Ascending aorta (tissue), 2 donors: ENCODE measurements at regions of chr1 and their contacts with region 1.

Region 1: GRCh38 chr1:201970334-201971159 is 11.9 kb upstream of the RNPEP start:
- DNase-seq: no peak
- H3K4me3 ChIP-seq: no peak overlapping the region
- H3K27ac ChIP-seq: peak overlapping the region in 1 of 2 donors; percentile 7
- H3K4me1 ChIP-seq: peaks cover 0 to 9% of the 10 kb centered on the region in 2 donors
- H3K27me3 ChIP-seq: no peaks in the 10 kb centered on the region
- CTCF ChIP-seq: no peak

Region 2: DNA sequence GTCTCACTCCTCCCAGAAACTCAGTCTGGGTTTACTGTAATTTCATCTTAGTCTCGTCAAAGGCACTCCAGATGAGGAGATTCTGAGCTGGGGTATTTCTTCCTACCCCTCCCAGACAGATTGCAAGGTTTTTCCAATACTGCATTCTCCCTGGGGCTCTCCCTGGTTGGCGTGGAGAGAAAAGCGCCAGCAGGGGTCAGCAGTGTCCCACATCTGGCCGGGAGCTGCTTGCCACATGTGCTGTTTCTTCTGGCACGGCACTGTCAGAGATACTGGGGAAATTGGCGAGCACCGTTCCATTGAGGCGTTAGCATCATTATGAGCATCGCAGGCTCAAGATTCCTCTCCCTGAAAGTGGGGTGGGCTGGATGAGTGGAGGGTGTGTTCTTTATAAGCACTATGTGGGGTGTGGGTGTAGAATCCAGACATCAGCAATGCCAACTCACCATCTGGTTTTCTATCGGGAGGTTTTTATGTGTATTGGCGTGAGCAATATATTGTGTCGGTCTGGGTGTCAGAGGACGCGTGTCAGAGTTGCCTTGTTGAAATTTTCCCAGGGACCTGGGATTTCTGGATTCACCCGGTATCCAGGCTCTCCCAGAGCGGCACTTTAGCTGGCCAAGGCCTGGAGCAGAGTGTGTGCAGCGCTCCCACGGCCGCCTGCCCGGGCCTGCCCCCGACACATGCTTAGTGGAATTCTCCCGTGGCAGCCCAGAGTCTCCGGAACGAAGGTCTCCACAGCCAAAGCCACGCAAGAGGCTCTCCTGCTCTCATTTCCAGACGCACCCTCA is 439.6 kb before region 1 on chr1:
- intact Hi-C with region 1: loop called (anchors 10 kb)
- DNase-seq: peak; percentile 51 to 95
- H3K4me3 ChIP-seq: no peak overlapping the region
- H3K27ac ChIP-seq: peak overlapping the region; percentile 51 to 59
- H3K4me1 ChIP-seq: peaks cover 20 to 45% of the 10 kb centered on the region in 2 donors
- H3K27me3 ChIP-seq: no peaks in the 10 kb centered on the region
- CTCF ChIP-seq: peak; percentile 89 to 96 (median 93)

Region 3: GRCh38 chr1:201828820-201829774 is 141.4 kb before region 1 on chr1 and contains the start of gene IPO9:
- intact Hi-C with region 1: loop called (anchors 5 kb)
- DNase-seq: peak; percentile 67 to 97
- H3K4me3 ChIP-seq: peak within 1 kb of the TSS; percentile 64 to 84
- H3K27ac ChIP-seq: peak within 1 kb of the TSS; percentile 92 to 94
- H3K4me1 ChIP-seq: peaks cover 3 to 30% of the 10 kb centered on the region in 2 donors
- H3K27me3 ChIP-seq: no peaks in the 10 kb centered on the region
- CTCF ChIP-seq: peak; percentile 91 to 97 (median 96)
- total RNA-seq, gene IPO9: 9.3 TPM

Region 4: DNA sequence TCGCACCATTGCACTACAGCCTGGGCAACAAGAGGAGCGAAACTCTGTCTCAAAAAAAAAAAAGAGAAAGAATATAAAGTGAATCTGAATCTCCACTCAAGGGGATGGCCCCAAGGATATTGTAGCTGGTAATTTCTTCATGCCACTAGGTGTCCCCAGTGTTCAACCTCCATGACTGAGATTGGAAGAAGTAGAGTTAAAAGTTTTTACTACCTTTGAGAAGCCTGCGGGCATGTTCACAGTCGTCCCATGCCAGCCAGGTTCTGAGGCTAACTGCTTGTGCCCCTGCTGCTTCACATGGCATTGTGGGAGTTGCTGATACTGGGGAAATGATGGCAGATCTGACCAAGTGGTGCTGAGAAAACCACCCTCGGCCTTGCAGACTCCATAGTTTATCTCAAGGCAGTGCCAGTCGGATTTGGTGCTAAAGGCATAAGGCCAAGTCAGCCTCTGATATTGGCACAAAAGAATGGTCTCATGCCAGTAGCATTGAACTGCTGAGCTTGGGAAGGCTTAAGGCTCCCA is 92.6 kb before region 1 on chr1:
- intact Hi-C with region 1: loop called (anchors 1 kb)
- DNase-seq: peak in 1 of 2 donors; percentile 76
- H3K4me3 ChIP-seq: no peak overlapping the region
- H3K27ac ChIP-seq: peak overlapping the region; percentile 46 to 65
- H3K4me1 ChIP-seq: peaks cover 3 to 12% of the 10 kb centered on the region in 2 donors
- H3K27me3 ChIP-seq: no peaks in the 10 kb centered on the region
- CTCF ChIP-seq: peak; percentile 46 to 79 (median 68)

Region 5: GRCh38 chr1:201895913-201896807 is 74.4 kb before region 1 on chr1:
- intact Hi-C with region 1: loop called (anchors 1 kb)
- DNase-seq: peak; percentile 69 to 96
- H3K4me3 ChIP-seq: no peak overlapping the region
- H3K27ac ChIP-seq: peak overlapping the region; percentile 87 to 94
- H3K4me1 ChIP-seq: peaks cover 42 to 69% of the 10 kb centered on the region in 2 donors
- H3K27me3 ChIP-seq: no peaks in the 10 kb centered on the region
- CTCF ChIP-seq: peak; percentile 90 to 97 (median 94)

Region 6: GRCh38 chr1:201945157-201945556 is 25.4 kb before region 1 on chr1:
- intact Hi-C with region 1: no loop called
- DNase-seq: no peak
- H3K4me3 ChIP-seq: peak overlapping the region; percentile 72 to 91
- H3K27ac ChIP-seq: peak overlapping the region; percentile 87 to 89
- H3K4me1 ChIP-seq: peaks cover 3 to 21% of the 10 kb centered on the region in 2 donors
- H3K27me3 ChIP-seq: no peaks in the 10 kb centered on the region
- CTCF ChIP-seq: peak; percentile 27 to 49 (median 34)

Region 7: DNA sequence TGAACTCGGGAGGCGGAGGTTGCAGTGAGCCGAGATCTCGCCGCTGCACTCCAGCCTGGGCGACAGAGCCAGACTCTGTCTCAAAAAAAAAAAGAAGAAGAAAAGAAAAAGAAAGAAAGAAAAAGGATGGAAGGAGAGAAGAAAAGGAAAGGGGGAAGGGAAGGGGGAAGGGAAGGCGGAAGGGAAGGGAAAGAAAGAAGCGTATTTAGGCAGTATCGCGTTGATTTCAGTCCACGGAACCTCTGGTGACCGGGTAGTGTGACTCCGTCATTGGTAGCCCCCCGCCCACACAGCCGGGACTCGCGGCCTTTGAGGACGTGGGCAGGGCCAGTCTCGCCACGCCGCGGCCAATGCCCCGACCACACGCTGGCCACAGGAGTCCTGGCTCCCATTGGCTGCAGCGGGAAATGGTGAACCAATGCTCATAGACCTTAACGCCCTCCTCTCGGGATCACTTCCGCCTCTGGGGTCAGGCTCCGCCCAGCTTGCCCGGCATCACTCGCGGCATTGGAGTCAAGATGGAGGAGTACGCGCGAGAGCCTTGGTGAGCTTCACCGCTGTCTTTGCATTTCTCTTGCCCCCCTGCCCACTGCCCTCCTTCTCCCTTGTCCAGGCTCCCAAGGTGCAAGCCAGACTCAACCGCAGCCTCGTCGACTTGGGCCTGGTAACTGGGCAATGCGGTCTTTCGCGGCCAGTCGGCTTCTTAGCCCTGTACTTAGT is 15.4 kb before region 1 on chr1 and contains the start of gene TIMM17A:
- intact Hi-C with region 1: loop called (anchors 2 kb)
- DNase-seq: peak; percentile 96 to 99
- H3K4me3 ChIP-seq: peak within 1 kb of the TSS; percentile 67 to 95
- H3K27ac ChIP-seq: peak within 1 kb of the TSS; percentile 89 to 92
- H3K4me1 ChIP-seq: peaks cover 5 to 16% of the 10 kb centered on the region in 2 donors
- H3K27me3 ChIP-seq: no peaks in the 10 kb centered on the region
- CTCF ChIP-seq: no peak
- total RNA-seq, gene TIMM17A: 7.9 TPM

Region 8: GRCh38 chr1:203492082-203492747 is 1521.7 kb after region 1 on chr1:
- intact Hi-C with region 1: no loop called
- DNase-seq: peak in 1 of 2 donors; percentile 59
- H3K4me3 ChIP-seq: no peak overlapping the region
- H3K27ac ChIP-seq: no peak overlapping the region
- H3K4me1 ChIP-seq: peaks cover under 1 to 7% of the 10 kb centered on the region in 2 donors
- H3K27me3 ChIP-seq: no peaks in the 10 kb centered on the region
- CTCF ChIP-seq: no peak